ENCODE measurements at regions of chr5 and their contacts with region 1.

Region 1: DNA sequence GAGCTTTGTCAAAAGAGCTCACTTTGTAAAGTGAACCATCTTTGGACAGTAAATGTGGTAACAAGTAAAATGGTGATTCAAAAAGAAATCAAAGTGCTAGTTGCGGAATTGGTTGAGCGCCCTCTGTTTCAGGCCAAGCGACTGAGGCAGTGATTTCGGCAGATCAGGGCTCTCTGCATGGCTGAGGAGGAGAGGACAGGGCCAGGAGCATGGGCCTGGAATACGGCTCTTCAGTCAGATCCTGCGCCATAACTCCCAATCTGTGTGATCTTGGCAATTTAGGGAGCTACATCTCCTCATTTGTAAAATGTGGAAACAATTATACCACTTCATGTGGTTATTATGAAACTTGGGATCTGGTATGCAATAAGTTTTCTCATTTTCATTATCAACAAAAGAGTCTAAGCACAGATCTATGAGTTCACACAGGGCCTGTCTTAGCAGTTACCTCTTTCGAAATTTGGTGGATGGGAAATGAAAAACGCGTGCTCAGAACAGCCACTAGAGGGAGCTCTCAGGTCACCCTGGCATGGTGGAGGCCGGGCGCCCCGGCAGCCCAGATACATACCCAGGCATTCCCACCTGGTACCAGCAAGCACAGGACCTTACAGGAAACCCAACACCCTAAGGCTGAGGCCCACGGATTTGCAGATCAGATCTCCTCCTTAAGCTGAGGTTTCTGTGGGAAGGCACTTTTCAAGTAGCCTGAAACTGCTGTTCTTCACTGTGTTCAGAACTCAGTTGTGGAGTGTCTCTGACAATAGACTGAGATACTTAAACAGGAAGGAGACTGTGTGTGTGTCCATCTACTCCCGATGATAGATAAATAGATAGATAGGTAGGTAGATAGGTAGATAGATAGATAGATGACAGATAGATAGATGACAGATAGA is 303.7 kb downstream of the RAB3C start:
- DNase-seq: peak; percentile 54 to 84 (median 68)
- H3K4me3 ChIP-seq: no peak overlapping the region
- H3K27ac ChIP-seq: peak overlapping the region in 2 of 5 donors; percentile 46 to 86
- H3K4me1 ChIP-seq: peaks cover 0 to 7% of the 10 kb centered on the region in 2 donors
- H3K27me3 ChIP-seq: no peaks in the 10 kb centered on the region
- CTCF ChIP-seq: peak; percentile 68 to 97 (median 82)
- POLR2A ChIP-seq: no peak

Region 2: GRCh38 chr5:58460732-58461286 is 425.8 kb before region 1 on chr5:
- intact Hi-C with region 1: no loop called
- DNase-seq: peak; percentile 86 to 97 (median 93)
- H3K4me3 ChIP-seq: peak overlapping the region in 2 of 4 donors; percentile 63 to 85
- H3K27ac ChIP-seq: peak overlapping the region; percentile 80 to 95 (median 92)
- H3K4me1 ChIP-seq: peaks cover 0 to 10% of the 10 kb centered on the region in 2 donors
- H3K27me3 ChIP-seq: no peaks in the 10 kb centered on the region
- CTCF ChIP-seq: peak; percentile 58 to 88 (median 74)
- POLR2A ChIP-seq: no peak

Region 3: DNA sequence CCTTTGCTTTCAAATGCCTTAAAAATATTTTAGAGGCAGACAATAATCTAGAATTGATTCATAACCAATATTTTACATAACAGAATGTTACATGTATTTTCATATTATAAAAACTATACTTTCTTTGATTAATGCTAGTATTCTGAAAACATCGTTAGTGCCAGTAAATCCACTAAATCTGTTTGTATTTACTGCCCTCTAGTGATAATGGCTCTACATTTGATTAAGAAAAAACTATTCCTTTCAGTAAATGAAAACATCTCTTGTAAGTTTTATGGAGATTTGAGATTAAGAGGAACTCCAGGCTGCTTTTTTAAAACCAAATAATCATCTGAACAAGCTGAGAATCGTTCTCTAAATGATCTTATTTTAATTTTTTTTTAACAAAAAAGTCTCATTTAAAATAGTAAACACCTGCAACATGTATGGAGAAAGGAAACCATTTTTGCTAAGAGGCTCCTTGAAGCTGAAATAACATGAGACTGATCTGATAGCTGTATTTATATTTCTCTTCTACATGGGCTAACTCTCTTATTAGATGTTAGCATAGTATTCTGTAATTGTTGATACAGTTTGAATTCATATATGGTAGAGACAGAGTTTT is 121.0 kb after region 1 on chr5:
- intact Hi-C with region 1: loop called (anchors 2 to 5 kb)
- DNase-seq: no peak
- H3K4me3 ChIP-seq: no peak overlapping the region
- H3K27ac ChIP-seq: no peak overlapping the region
- H3K4me1 ChIP-seq: no peaks in the 10 kb centered on the region
- H3K27me3 ChIP-seq: no peaks in the 10 kb centered on the region
- CTCF ChIP-seq: peak; percentile 17 to 79 (median 65)
- POLR2A ChIP-seq: no peak

Region 4: GRCh38 chr5:59164041-59164830 is 277.7 kb after region 1 on chr5:
- intact Hi-C with region 1: loop called in 1 of 2 experiments (anchors 10 kb)
- DNase-seq: no peak
- H3K4me3 ChIP-seq: no peak overlapping the region
- H3K27ac ChIP-seq: no peak overlapping the region
- H3K4me1 ChIP-seq: no peaks in the 10 kb centered on the region
- H3K27me3 ChIP-seq: no peaks in the 10 kb centered on the region
- CTCF ChIP-seq: no peak
- POLR2A ChIP-seq: no peak

Measured in adrenal gland (tissue), 19 donors.